ENCODE measurements at regions of chr9 and their contacts with region 1.

Region 1: DNA sequence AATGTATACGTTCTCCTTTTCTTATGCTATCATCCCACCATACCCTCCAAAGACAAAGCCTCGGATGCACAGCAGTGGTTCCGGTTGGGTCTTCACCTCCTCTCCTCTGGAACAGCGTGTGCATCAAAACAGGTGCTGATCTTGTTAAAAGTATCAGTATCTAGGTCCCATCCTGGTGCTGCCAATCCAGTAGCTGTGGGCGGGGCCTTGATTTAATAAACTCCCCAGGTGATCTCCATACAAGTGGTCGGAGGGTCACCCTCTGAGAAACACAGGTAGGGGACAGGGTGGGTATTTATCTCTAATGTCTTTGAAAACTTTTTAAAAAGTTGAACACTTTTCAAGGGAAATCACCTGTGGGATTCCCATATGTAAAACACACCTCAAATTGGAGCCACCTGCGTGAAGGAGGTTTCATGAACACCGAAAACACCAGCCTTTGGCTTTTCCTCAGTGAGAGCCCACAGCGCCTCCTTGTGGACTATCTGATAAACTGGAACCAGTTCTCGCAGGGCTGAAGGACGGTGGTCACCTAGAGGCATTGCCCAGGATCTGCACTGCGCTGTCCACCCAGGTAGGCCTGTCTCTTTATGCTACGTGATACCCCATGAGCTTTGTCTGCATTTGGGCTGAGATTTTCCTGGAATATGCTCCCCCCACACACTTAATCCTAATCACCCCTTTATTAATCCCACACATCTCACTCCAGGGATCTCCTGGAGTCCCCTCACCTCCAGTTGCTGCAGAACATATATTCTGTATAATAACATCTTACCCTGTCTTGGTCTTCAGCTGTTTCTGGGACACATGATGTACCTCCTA is 80.5 kb upstream of the EPB41L4B start:
- DNase-seq: peak; percentile 36
- H3K4me3 ChIP-seq: no peak overlapping the region
- H3K27ac ChIP-seq: no peak overlapping the region
- H3K4me1 ChIP-seq: no peaks in the 10 kb centered on the region
- H3K27me3 ChIP-seq: peaks cover 0 to 3% of the 10 kb centered on the region in 2 experiments
- CTCF ChIP-seq: peak; percentile 74 to 80
- POLR2A ChIP-seq: no peak

Region 2: GRCh38 chr9:108850293-108850897 is 551.0 kb before region 1 on chr9:
- CTCF ChIA-PET with region 1: no interaction called
- POLR2A ChIA-PET with region 1: no interaction called
- dilution Hi-C with region 1: no loop called
- intact Hi-C with region 1: loop called (anchors 5 kb)
- DNase-seq: peak; percentile 34
- H3K4me3 ChIP-seq: no peak overlapping the region
- H3K27ac ChIP-seq: no peak overlapping the region
- H3K4me1 ChIP-seq: no peaks in the 10 kb centered on the region
- H3K27me3 ChIP-seq: peaks cover 0 to 2% of the 10 kb centered on the region in 2 experiments
- CTCF ChIP-seq: peak in 1 of 2 donors; percentile 28
- POLR2A ChIP-seq: no peak

Region 3: GRCh38 chr9:109192732-109193361 is 208.5 kb before region 1 on chr9:
- CTCF ChIA-PET with region 1: no interaction called
- POLR2A ChIA-PET with region 1: no interaction called
- dilution Hi-C with region 1: no loop called
- intact Hi-C with region 1: loop called (anchors 1 kb)
- DNase-seq: no peak
- H3K4me3 ChIP-seq: no peak overlapping the region
- H3K27ac ChIP-seq: no peak overlapping the region
- H3K4me1 ChIP-seq: no peaks in the 10 kb centered on the region
- H3K27me3 ChIP-seq: no peaks in the 10 kb centered on the region
- CTCF ChIP-seq: peak in 1 of 2 donors; percentile 35
- POLR2A ChIP-seq: no peak

Region 4: DNA sequence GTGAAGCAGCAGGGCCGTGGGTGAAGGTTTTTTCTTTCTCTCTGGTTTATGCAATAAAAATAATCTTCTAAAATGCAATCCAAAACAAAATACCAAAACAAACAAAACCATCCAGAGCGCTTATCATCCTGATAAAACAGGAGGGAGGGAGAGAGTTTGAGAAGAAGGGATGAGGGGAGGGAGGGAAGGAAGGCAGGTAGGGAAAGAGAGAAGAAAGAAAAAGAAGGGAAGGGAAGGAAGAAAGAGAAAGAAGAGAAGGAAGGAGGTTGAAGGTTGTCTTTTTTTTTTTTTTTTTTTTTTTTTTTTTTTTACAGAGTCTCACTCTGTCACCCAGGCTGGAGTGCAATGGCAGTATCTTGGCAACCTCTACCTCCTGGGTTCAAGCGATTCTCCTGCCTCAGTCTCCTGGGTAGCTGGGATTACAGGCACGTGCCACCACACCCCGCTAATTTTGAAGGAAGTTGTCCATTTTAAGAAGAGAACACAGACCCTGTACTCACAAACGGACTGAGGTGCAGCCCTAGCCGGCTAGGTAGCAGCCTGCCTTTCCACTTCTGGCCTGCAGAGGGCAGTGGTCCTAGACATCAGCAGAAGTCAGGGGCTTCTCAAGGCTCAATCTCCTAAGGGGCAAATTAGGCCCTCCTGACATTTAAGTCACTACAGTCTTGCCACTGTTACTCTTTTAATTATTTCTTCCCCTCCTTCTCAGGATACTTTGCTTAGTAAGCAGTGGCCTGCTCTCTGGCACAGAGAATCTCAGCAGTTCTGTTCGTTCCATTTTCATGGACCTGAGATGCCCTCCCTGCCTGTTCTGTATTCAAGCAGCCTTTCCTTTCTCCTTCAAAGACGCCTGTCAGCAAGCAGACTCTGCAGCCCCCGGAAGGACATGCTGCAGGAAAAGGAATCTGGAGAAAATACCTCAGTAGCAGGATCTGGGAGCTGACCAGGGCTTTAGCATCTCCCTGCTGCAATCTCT is 156.9 kb before region 1 on chr9:
- CTCF ChIA-PET with region 1: no interaction called
- POLR2A ChIA-PET with region 1: no interaction called
- dilution Hi-C with region 1: no loop called
- intact Hi-C with region 1: loop called (anchors 1 kb)
- DNase-seq: peak; percentile 75
- H3K4me3 ChIP-seq: no peak overlapping the region
- H3K27ac ChIP-seq: no peak overlapping the region
- H3K4me1 ChIP-seq: peaks cover 13% of the 10 kb centered on the region
- H3K27me3 ChIP-seq: no peaks in the 10 kb centered on the region
- CTCF ChIP-seq: peak; percentile 87 to 97
- POLR2A ChIP-seq: no peak

Region 5: GRCh38 chr9:109264877-109265587 is 136.3 kb before region 1 on chr9:
- CTCF ChIA-PET with region 1: no interaction called
- POLR2A ChIA-PET with region 1: no interaction called
- dilution Hi-C with region 1: no loop called
- intact Hi-C with region 1: no loop called
- DNase-seq: no peak
- H3K4me3 ChIP-seq: no peak overlapping the region
- H3K27ac ChIP-seq: no peak overlapping the region
- H3K4me1 ChIP-seq: no peaks in the 10 kb centered on the region
- H3K27me3 ChIP-seq: no peaks in the 10 kb centered on the region
- CTCF ChIP-seq: no peak
- POLR2A ChIP-seq: no peak

Region 6: GRCh38 chr9:109341565-109341964 is 59.8 kb before region 1 on chr9:
- CTCF ChIA-PET with region 1: no interaction called
- POLR2A ChIA-PET with region 1: no interaction called
- dilution Hi-C with region 1: no loop called
- intact Hi-C with region 1: no loop called
- DNase-seq: no peak
- H3K4me3 ChIP-seq: no peak overlapping the region
- H3K27ac ChIP-seq: no peak overlapping the region
- H3K4me1 ChIP-seq: no peaks in the 10 kb centered on the region
- H3K27me3 ChIP-seq: no peaks in the 10 kb centered on the region
- CTCF ChIP-seq: no peak
- POLR2A ChIP-seq: no peak

Region 7: GRCh38 chr9:109411798-109412352 is 10.5 kb after region 1 on chr9:
- CTCF ChIA-PET with region 1: interaction called, 11 read pairs
- POLR2A ChIA-PET with region 1: no interaction called
- dilution Hi-C with region 1: no loop called
- intact Hi-C with region 1: no loop called
- DNase-seq: no peak
- H3K4me3 ChIP-seq: no peak overlapping the region
- H3K27ac ChIP-seq: no peak overlapping the region
- H3K4me1 ChIP-seq: no peaks in the 10 kb centered on the region
- H3K27me3 ChIP-seq: no peaks in the 10 kb centered on the region
- CTCF ChIP-seq: peak; percentile 49 to 50
- POLR2A ChIP-seq: no peak

Measured in endothelial cell of umbilical vein (primary cell).